Panc1 (cell line): ENCODE measurements at regions of chr6 and their contacts with region 1.

Region 1: GRCh38 chr6:158869826-158870648 is 50.9 kb upstream of the EZR start:
- DNase-seq: peak; percentile 94
- ATAC-seq: peak; percentile 95; the same call in 1 of the 2 replicates
- H3K4me3 ChIP-seq: peak overlapping the region; percentile 60 to 87
- H3K27ac ChIP-seq: peak overlapping the region; percentile 95
- H3K4me1 ChIP-seq: peaks cover 21% of the 10 kb centered on the region
- H3K27me3 ChIP-seq: no peaks in the 10 kb centered on the region
- CTCF ChIP-seq: no peak

Region 2: DNA sequence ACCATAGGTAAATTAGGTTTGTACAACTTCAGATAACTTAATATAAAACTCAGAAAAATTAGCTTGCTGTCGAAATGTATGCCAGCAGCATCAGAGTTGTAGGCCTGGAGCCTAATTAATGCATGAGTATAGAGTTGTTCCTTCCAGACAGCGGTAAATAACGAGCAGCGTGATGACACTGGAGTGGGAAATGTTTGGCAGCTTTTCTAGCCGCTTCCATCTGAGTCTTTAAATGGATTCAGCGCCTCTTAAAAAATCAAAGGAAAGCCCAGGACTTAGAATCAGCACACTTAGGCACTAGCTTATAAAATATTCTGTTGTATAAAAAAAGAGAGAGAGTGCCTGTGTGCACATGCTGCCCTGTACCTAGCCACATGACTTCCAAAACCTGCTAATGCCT is 932.1 kb before region 1 on chr6:
- CTCF ChIA-PET with region 1: no interaction called
- POLR2A ChIA-PET with region 1: no interaction called
- in situ Hi-C with region 1: no loop called
- intact Hi-C with region 1: no loop called
- DNase-seq: no peak
- ATAC-seq: no peak
- H3K4me3 ChIP-seq: no peak overlapping the region
- H3K27ac ChIP-seq: no peak overlapping the region
- H3K4me1 ChIP-seq: no peaks in the 10 kb centered on the region
- H3K27me3 ChIP-seq: no peaks in the 10 kb centered on the region
- CTCF ChIP-seq: no peak

Region 3: GRCh38 chr6:158819213-158819909 is 50.7 kb before region 1 on chr6 and contains the start of gene EZR:
- CTCF ChIA-PET with region 1: no interaction called
- POLR2A ChIA-PET with region 1: interaction called, 7 read pairs
- in situ Hi-C with region 1: no loop called
- intact Hi-C with region 1: loop called (anchors 5 kb)
- DNase-seq: no peak
- ATAC-seq: peak; percentile 86
- H3K4me3 ChIP-seq: peak within 1 kb of the TSS; percentile 86 to 89
- H3K27ac ChIP-seq: peak within 1 kb of the TSS; percentile 85
- H3K4me1 ChIP-seq: peaks cover 25% of the 10 kb centered on the region
- H3K27me3 ChIP-seq: no peaks in the 10 kb centered on the region
- CTCF ChIP-seq: no peak
- total RNA-seq, gene EZR: 263 TPM

Region 4: GRCh38 chr6:158910484-158911348 is 40.7 kb after region 1 on chr6:
- CTCF ChIA-PET with region 1: interaction called, 5 read pairs
- POLR2A ChIA-PET with region 1: interaction called, 17 read pairs
- in situ Hi-C with region 1: no loop called
- intact Hi-C with region 1: no loop called
- DNase-seq: no peak
- ATAC-seq: no peak
- H3K4me3 ChIP-seq: peak overlapping the region in 1 of 2 experiments; percentile 19; a peak in 2 of 4 replicates
- H3K27ac ChIP-seq: peak overlapping the region; percentile 25; the same call in 1 of the 2 replicates
- H3K4me1 ChIP-seq: no peaks in the 10 kb centered on the region; the same call in 1 of the 2 replicates
- H3K27me3 ChIP-seq: no peaks in the 10 kb centered on the region
- CTCF ChIP-seq: no peak